ENCODE measurements at regions of chr12 and their contacts with region 1.

Region 1: GRCh38 chr12:55817346-55818139 is at the starts of genes ORMDL2 and SARNP:
- DNase-seq: peak; percentile 100
- H3K4me3 ChIP-seq: peak within 1 kb of the TSS; percentile 95 to 99 (median 98)
- H3K27ac ChIP-seq: peak within 1 kb of the TSS; percentile 81
- H3K4me1 ChIP-seq: peaks cover 16% of the 10 kb centered on the region
- H3K27me3 ChIP-seq: no peaks in the 10 kb centered on the region
- CTCF ChIP-seq: no peak
- POLR2A ChIP-seq: peak; percentile 78
- total RNA-seq, gene ORMDL2: 55.0 and 57.8 TPM in 2 replicates
- total RNA-seq, gene SARNP: 88.1 and 101 TPM in 2 replicates

Region 2: DNA sequence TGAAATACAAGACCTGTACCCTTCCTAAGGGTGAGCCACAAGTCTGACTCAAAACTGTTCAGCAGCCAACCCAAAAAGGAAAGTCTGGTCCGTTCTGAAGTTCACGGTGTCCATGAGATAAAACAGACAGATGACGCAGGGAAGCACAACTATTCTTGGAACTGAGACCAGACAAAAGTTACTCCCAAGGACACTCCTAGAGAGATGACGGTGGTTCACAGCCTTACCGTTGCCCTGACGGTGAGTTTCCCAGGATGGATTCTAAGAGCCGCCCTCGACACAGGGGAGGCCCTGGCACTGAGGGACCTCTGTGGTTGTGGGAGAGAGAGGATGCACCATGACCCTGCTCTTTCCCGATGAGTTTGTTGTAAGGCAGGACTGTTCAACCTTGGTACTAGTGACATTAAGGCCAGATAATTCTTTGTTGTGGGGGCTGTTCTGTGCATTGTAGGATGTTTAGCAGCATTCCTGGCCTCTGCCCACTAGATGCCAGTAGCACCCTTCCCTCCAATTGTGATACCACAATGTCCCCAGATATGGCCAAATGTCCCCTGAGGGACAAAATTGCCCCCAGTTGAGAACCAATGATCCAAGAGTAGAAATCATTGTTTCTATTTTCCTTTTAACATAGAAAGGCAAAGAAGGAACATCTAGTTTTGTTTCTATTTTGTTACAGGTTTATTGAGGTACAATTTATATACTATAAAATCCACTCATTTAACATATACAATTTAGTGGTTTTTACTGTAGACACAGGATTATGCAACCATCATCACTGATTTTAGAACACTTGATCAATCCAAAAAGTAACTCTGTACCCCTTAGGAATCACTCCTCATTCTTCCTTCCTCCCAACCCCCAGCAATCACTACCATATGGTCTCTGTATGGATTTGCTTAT is 157.8 kb before region 1 on chr12:
- CTCF ChIA-PET with region 1: no interaction called
- POLR2A ChIA-PET with region 1: no interaction called
- dilution Hi-C with region 1: no loop called
- intact Hi-C with region 1: no loop called
- DNase-seq: peak; percentile 12
- H3K4me3 ChIP-seq: no peak overlapping the region
- H3K27ac ChIP-seq: no peak overlapping the region
- H3K4me1 ChIP-seq: no peaks in the 10 kb centered on the region
- H3K27me3 ChIP-seq: peaks cover 11 to 18% of the 10 kb centered on the region in 2 experiments
- CTCF ChIP-seq: peak; percentile 31 to 54
- POLR2A ChIP-seq: no peak

Region 3: GRCh38 chr12:55829967-55830600 is 12.5 kb after region 1 on chr12:
- CTCF ChIA-PET with region 1: interaction called, 38 read pairs
- POLR2A ChIA-PET with region 1: interaction called, 40 read pairs
- dilution Hi-C with region 1: no loop called
- intact Hi-C with region 1: loop called (anchors 1 kb)
- DNase-seq: peak; percentile 70
- H3K4me3 ChIP-seq: peak overlapping the region; percentile 81 to 92 (median 82)
- H3K27ac ChIP-seq: peak overlapping the region; percentile 60
- H3K4me1 ChIP-seq: peaks cover 27% of the 10 kb centered on the region
- H3K27me3 ChIP-seq: no peaks in the 10 kb centered on the region
- CTCF ChIP-seq: no peak
- POLR2A ChIP-seq: no peak

Region 4: DNA sequence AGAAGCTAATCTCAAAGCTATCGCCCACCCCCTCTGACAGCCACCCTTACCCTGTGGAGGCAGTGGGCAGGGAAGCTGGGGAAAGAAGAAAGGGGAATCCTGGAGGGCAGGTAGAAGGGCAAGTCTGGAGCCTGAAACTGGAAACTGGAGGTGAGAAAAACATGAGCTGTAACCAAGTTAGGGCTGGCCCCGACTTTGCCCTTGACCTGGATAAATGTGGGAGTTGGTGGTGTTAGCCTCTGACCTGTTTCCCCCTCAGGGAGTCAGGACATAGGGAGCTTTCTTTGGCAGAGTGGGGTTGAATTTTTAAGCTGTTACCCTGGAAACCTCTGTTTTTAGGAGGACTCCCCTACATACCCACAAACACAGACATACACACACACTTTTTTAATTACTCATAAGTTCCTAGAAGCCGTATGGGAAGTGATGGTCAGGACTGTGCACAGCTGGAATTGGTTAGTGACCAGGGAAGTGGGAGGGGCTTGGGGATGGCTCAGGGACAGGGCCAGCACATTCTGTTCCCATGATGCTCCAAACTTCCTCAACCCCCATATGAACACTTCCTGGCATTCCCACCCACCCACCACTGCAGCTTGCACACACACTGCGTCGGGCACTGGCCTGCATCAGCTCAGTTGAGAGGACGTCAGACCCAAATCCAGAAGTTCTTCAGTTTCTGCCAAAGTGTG is 30.2 kb after region 1 on chr12:
- CTCF ChIA-PET with region 1: interaction called, 10 read pairs
- POLR2A ChIA-PET with region 1: interaction called, 7 read pairs
- dilution Hi-C with region 1: no loop called
- intact Hi-C with region 1: no loop called
- DNase-seq: peak; percentile 94
- H3K4me3 ChIP-seq: no peak overlapping the region
- H3K27ac ChIP-seq: peak overlapping the region; percentile 99
- H3K4me1 ChIP-seq: peaks cover 18% of the 10 kb centered on the region
- H3K27me3 ChIP-seq: no peaks in the 10 kb centered on the region
- CTCF ChIP-seq: no peak
- POLR2A ChIP-seq: peak; percentile 78

Region 5: DNA sequence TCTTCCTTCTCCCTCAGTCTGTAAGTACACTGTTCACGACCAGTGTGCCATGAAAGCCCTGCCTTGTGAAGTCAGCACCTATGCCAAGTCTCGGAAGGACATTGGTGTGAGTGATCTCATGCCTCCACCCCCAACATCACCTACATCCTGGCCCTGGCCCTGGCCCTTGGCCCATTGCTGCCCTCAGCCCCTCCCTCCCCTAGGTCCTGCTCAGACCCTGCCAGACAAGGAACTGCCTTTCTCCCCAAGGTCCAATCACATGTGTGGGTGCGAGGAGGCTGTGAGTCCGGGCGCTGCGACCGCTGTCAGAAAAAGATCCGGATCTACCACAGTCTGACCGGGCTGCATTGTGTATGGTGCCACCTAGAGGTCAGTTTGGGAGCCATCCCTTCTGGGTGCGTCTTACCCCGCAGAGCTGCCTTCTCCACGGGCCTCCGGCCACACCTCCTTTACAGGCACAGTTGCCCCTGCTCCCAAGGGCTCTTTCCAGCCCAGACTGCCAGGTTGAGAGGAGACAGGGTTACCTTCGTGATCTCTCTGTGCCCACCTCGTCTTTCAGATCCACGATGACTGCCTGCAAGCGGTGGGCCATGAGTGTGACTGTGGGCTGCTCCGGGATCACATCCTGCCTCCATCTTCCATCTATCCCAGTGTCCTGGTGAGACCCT is 122.7 kb after region 1 on chr12:
- CTCF ChIA-PET with region 1: interaction called, 23 read pairs
- POLR2A ChIA-PET with region 1: no interaction called
- dilution Hi-C with region 1: no loop called
- intact Hi-C with region 1: loop called (anchors 1 kb)
- DNase-seq: peak; percentile 85
- H3K4me3 ChIP-seq: no peak overlapping the region
- H3K27ac ChIP-seq: no peak overlapping the region
- H3K4me1 ChIP-seq: no peaks in the 10 kb centered on the region
- H3K27me3 ChIP-seq: no peaks in the 10 kb centered on the region
- CTCF ChIP-seq: peak; percentile 89 to 98
- POLR2A ChIP-seq: no peak

Region 6: GRCh38 chr12:55973598-55974307 is 156.2 kb after region 1 on chr12 and contains the start of gene RAB5B:
- CTCF ChIA-PET with region 1: no interaction called
- POLR2A ChIA-PET with region 1: no interaction called
- dilution Hi-C with region 1: no loop called
- intact Hi-C with region 1: loop called (anchors 1 kb)
- DNase-seq: peak; percentile 100
- H3K4me3 ChIP-seq: peak within 1 kb of the TSS; percentile 87 to 93 (median 92)
- H3K27ac ChIP-seq: peak within 1 kb of the TSS; percentile 81
- H3K4me1 ChIP-seq: peaks cover 27% of the 10 kb centered on the region
- H3K27me3 ChIP-seq: no peaks in the 10 kb centered on the region
- CTCF ChIP-seq: no peak
- POLR2A ChIP-seq: peak; percentile 74
- total RNA-seq, gene RAB5B: 97.4 and 103 TPM in 2 replicates

Region 7: DNA sequence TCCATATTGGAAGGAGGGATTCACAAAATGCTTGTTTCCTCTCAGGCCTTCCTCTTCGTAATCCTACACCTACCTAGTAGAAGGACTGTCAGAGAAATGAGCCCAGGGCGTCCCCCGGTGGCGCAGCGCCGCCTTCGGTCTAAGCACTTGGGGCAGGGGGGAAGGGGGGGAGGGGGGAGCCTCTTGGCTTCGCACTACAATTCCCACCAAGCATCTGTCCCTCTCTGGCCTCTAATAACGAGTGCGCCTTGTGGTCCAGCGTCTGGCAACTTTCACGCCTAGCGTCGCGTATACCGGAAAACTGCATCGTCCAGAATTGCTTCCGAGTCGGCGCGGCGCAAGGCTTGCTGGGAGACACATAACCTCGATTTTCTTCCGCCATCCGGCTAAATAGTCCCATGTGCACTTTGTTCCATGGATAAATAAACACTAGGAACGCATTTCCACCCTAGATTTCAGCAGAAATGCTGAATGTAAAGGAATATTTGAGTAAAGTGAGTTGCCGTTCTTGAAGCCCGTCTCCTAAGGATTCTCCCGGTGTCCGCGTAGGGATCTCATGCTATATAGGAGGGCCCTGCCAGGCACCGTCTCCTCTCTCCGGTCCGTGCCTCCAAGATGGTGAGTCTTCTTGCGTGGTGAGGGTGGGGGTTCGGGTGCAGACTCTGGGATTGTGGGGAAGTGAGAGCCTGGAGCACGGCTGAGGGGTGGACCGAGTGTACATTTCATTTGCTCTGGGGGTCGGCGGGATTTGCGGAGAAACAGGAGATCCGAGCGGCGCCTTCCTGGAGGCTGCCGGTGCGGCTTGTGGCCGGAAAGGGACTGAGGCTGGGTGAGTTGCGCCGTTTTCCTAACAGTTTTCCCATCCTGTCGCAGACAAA is 224.2 kb after region 1 on chr12 and contains the start of gene RPS26:
- CTCF ChIA-PET with region 1: no interaction called
- POLR2A ChIA-PET with region 1: no interaction called
- dilution Hi-C with region 1: no loop called
- intact Hi-C with region 1: loop called (anchors 1 kb)
- DNase-seq: peak; percentile 100
- H3K4me3 ChIP-seq: peak within 1 kb of the TSS; percentile 84 to 100 (median 87)
- H3K27ac ChIP-seq: peak within 1 kb of the TSS; percentile 95
- H3K4me1 ChIP-seq: peaks cover 17% of the 10 kb centered on the region
- H3K27me3 ChIP-seq: no peaks in the 10 kb centered on the region
- CTCF ChIP-seq: peak in 1 of 2 donors; percentile 46
- POLR2A ChIP-seq: peak; percentile 99
- total RNA-seq, gene RPS26: 57.3 and 66.7 TPM in 2 replicates